ENCODE measurements at regions of chr15 and their contacts with region 1.

Region 1: GRCh38 chr15:33126559-33127290 is 67.8 kb downstream of the FMN1 start:
- DNase-seq: peak; percentile 77
- H3K4me3 Mint-ChIP-seq: no peak overlapping the region
- H3K27ac Mint-ChIP-seq: no peak overlapping the region
- H3K4me1 Mint-ChIP-seq: peaks cover 17% of the 10 kb centered on the region
- H3K27me3 Mint-ChIP-seq: no peaks in the 10 kb centered on the region

Region 2: GRCh38 chr15:33154351-33155166 is 27.8 kb after region 1 on chr15:
- CTCF ChIA-PET with region 1: interaction called, 3 read pairs
- intact Hi-C with region 1: loop called (anchors 5 kb)
- DNase-seq: no peak
- H3K4me3 Mint-ChIP-seq: no peak overlapping the region
- H3K27ac Mint-ChIP-seq: no peak overlapping the region
- H3K4me1 Mint-ChIP-seq: peaks cover 7% of the 10 kb centered on the region
- H3K27me3 Mint-ChIP-seq: peaks cover 3% of the 10 kb centered on the region

Region 3: GRCh38 chr15:33256874-33257273 is 130.1 kb after region 1 on chr15:
- CTCF ChIA-PET with region 1: no interaction called
- intact Hi-C with region 1: no loop called
- DNase-seq: no peak
- H3K4me3 Mint-ChIP-seq: no peak overlapping the region
- H3K27ac Mint-ChIP-seq: no peak overlapping the region
- H3K4me1 Mint-ChIP-seq: no peaks in the 10 kb centered on the region
- H3K27me3 Mint-ChIP-seq: peaks cover 7% of the 10 kb centered on the region